Cardiac septum (tissue), 1 donor: ENCODE measurements at regions of chr1 and their contacts with region 1.

Region 1: DNA sequence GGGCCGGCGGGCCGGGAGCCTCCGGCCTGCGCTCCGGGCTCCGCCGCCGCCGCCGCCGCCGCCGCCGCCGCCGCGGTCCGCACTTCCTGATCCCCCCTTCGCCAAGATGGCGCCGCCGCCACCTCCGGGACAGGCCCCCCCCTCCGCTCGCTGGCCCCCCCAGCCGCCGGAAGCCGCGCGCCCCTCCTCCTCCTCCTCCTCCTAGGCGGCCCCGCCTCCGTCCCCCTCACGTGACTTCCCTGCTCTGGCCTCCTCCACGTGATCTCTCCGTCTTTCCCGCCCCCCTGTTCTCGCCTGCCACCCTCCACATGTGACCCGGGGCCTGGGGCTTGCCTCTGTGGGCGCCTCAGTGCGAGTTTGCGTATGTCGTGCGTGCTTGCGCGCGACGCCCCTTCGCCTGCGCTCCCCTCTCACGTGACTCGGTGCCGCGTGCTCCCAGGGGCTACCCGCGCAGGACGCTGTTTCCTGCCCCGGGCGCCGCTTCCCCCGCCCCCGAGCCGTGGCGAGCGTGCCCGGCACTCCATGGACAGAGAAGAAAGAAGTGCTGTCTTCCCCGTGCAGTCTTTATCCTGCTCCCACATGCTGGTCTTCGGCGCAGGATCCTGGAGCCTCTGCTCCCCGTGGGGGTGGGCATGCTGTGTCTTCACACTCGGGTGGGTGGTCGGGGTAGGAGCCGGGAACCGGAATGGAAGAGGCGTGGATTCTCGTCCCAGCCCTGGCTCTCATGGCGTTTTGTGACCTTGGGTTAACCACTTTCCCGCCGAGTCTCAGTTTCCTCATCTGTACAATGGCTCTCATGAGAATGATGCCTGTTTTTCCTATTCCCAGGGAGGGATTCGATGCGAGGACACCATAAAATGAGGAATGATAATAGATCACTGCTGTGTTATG is at the start of gene UBE2Q1:
- DNase-seq: peak; percentile 99
- total RNA-seq, gene UBE2Q1: 65.5 TPM

Region 2: DNA sequence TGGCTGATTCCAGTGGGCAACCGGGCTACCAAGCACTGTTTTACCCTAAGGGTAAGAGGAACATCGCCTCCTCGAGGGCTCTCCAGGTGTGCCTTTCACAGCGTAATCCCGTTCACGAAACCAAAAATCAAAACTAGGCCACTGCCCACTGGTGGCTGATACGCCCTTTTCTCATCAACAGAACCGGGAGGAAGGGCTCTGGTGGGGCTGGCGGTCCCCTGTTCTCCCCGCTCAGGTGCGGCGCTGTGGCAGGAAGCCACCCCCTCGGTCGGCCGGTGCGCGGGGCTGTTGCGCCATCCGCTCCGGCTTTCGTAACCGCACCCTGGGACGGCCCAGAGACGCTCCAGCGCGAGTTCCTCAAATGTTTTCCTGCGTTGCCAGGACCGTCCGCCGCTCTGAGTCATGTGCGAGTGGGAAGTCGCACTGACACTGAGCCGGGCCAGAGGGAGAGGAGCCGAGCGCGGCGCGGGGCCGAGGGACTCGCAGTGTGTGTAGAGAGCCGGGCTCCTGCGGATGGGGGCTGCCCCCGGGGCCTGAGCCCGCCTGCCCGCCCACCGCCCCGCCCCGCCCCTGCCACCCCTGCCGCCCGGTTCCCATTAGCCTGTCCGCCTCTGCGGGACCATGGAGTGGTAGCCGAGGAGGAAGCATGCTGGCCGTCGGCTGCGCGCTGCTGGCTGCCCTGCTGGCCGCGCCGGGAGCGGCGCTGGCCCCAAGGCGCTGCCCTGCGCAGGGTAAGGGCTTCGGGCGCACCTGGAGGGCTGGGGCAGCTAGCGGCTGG is 153.6 kb before region 1 on chr1 and contains the start of gene IL6R:
- intact Hi-C with region 1: loop called (anchors 5 kb)
- DNase-seq: peak; percentile 98
- total RNA-seq, gene IL6R: 5.2 TPM

Region 3: DNA sequence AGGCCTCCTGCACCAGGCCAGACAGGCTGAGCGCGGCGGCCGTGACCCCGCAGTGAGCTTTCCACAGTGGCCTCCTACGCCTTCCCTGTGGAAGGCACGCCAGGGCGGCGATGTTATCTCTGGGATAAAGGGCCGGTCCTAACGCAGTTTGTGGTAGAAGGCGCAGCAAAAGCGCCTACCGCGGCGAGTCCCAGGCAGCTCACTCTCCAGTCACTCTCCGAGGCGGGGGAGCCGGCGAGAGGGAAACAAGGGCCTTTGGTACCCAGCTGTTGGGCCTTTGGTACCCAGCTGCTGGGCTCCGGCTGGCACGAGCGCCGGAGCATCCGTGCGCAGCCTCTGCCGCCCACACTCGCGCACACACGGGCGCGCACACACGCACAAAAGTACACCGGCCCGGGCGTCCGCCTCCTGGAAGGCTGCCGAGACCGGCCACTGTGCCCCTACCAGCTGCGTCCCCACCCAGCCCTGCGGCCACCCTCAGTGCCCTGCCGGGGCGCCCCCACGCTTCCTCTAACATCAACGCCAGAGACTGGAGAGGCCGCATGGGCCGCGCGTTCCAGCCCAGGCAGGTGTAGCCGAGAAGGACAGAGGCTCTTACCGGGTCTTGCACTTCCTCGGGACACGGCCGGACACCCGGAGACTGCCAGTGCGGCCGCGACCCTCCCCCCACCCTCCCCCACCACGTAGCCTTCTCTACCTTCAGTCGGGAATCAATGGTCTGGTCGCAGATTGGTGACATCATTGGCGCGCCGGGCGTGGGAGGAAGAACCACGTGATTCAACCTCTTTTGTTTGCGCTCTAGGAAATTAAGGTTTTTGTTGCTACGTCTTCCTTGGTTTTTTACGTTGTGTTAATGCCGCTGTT is 68.7 kb after region 1 on chr1:
- intact Hi-C with region 1: loop called (anchors 2 kb)
- DNase-seq: peak; percentile 94

Region 4: GRCh38 chr1:154878371-154879022 is 319.7 kb after region 1 on chr1:
- intact Hi-C with region 1: loop called (anchors 1 kb)
- DNase-seq: peak; percentile 88

Region 5: GRCh38 chr1:155001675-155002463 is 443.0 kb after region 1 on chr1:
- intact Hi-C with region 1: loop called (anchors 2 kb)
- DNase-seq: peak; percentile 100